ENCODE measurements at regions of chr19 and their contacts with region 1.

Region 1: GRCh38 chr19:3035542-3036118 is 6.5 kb upstream of the TLE2 start:
- DNase-seq: peak; percentile 86
- H3K4me3 ChIP-seq: peak overlapping the region; percentile 61
- CTCF ChIP-seq: no peak

Region 2: DNA sequence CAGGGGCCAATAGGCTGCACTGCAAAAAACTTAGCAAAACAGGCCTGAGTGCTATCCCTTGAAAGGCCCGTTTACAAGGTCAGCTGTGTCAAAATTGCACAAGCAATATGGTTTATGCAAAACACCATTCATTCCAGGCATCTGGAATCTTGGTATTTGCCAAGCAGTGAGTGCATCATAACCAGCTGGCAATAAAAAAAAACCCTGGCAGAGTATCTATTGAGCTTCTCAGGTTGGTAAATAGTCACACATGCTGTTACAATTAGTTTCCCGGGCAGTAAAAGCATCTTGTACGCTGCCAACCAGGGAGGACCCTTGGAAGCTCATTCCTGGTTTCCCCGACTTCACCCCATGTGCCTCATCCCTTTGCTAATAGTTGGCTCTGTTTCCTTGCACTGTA is 112.1 kb before region 1 on chr19:
- CTCF ChIA-PET with region 1: no interaction called
- POLR2A ChIA-PET with region 1: no interaction called
- DNase-seq: no peak
- H3K4me3 ChIP-seq: no peak overlapping the region
- CTCF ChIP-seq: no peak

Region 3: GRCh38 chr19:3055741-3056416 is 20.2 kb after region 1 on chr19:
- CTCF ChIA-PET with region 1: interaction called, 3 read pairs
- POLR2A ChIA-PET with region 1: interaction called, 11 read pairs
- DNase-seq: no peak
- H3K4me3 ChIP-seq: no peak overlapping the region
- CTCF ChIP-seq: no peak